Right ventricle myocardium inferior (tissue), 1 donor: ENCODE measurements at regions of chr3 and their contacts with region 1.

Region 1: DNA sequence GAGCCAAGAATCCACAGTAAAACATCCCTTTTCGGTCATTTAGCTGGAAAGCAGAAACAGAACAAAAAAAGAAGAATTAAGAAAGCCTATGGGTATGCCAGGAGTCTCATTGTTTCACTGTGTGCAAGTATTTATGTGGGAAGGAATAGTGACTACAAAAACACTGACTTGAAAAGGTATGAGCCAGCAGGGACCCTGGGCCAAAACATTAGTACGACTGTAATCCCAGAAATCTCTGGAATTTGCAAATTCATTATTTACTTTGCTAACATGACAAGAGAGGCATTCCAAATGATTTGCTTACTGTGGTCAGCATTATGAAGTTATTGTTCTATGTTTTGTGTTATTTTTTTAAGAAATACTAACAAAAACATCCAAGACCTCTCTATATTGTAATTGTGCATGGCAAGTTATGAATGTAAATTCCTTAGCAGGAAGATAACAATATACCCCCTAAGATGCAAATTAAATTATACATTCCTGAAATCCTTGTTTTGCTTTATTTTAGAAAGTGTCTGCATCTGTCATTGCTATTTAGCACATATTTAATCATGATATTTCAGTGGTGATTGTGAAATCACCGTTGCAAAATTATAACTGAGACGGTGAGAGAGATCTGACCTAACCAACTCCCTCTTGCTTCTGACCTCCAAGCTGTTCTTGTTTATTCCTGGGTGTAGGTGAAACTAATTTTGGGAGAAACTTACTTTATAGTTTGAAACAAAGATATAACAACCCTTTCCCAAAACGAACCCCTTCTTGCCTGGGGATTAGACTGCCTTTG is 299.2 kb downstream of the ZPLD1 start:
- DNase-seq: no peak
- ATAC-seq: no peak

Region 2: DNA sequence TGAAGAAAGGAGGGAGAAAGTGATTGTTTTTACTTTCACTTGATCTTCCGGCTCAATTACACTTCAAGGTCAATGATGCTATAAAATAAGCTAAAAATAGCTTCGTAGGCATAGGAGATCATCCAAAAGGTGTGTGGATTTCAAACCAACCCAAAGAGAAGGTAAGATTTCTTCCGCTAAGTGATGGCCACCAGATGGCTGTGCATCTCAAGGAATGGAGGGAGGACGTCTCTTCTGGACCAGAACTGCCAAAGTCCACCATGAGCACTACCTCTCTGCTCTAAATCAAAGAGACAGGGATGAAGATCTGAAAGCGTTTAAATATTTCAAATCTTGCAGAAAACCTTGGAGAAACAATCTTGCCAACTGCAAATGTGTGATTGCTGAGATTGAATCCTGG is 498.3 kb before region 1 on chr3:
- intact Hi-C with region 1: loop called (anchors 10 kb)
- DNase-seq: no peak
- ATAC-seq: no peak

Region 3: GRCh38 chr3:102329066-102329465 is 404.9 kb before region 1 on chr3:
- intact Hi-C with region 1: no loop called
- DNase-seq: no peak
- ATAC-seq: no peak

Region 4: DNA sequence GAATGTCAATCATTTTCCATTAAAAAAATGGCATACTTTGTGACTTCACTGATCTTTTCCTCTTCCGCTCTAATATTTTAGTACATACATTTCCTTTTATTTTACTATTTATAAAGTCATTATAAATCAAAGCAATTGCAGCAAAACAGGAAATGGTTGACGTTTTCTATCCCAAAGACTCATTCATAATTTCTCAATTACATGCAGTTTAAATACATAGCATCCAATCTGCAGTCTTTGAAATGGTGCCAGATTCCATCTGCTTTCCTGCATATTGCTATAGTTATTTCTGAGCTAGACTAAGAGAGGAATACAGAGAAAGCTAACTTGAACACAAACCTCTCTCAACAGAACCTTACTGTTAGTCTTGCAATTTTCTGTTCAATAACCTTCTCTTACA is 119.4 kb before region 1 on chr3:
- intact Hi-C with region 1: no loop called
- DNase-seq: no peak
- ATAC-seq: no peak

Region 5: GRCh38 chr3:102673271-102674115 is 60.5 kb before region 1 on chr3:
- intact Hi-C with region 1: loop called (anchors 1 kb)
- DNase-seq: peak; percentile 62
- ATAC-seq: peak; percentile 95

Region 6: GRCh38 chr3:102699819-102700140 is 34.2 kb before region 1 on chr3:
- intact Hi-C with region 1: loop called (anchors 5 kb)
- DNase-seq: no peak
- ATAC-seq: peak; percentile 86